KBM-7 (cell line): ENCODE measurements at regions of chr1 and their contacts with region 1.

Region 1: DNA sequence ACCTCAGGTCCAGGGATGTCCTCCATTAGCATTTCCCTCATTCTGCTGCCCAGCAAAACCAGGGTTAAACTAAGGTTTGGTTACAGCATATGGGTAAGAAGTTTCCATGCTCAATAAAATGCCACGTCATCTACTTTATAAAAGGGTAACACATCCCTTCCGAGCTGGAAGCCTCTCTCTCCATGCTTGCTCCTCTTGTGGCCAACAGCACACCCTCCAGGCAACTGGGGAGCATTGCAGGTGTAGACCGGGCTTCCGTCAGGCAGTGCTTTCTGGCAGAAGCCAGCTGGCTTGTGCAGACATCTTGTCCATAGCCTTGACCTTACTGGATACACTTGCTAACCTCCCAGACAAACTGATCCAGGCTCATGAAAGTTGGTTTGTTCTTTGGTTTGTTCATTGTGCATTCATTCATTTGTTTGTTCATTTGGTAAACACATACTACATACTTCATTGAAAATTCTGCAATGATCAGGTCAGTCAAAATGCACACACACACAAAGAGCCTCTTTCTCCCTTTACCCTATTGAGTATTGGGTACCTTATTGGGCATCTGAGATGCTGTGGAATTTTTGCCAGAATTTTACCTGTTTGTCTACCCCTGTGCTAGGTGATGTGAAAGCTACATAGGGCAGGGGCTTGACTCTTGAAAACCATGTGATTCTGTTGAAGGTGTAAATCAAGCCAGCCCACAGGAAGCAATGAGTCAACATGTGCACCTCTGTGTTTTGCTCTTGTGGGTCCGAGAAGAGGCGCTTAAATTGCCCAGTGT is 422.8 kb downstream of the CAMTA1 start:
- DNase-seq: peak; percentile 62

Region 2: GRCh38 chr1:6701437-6702153 is 506.5 kb before region 1 on chr1 and contains the start of gene DNAJC11:
- in situ Hi-C with region 1: loop called (anchors 25 kb)
- DNase-seq: peak; percentile 84

Region 3: DNA sequence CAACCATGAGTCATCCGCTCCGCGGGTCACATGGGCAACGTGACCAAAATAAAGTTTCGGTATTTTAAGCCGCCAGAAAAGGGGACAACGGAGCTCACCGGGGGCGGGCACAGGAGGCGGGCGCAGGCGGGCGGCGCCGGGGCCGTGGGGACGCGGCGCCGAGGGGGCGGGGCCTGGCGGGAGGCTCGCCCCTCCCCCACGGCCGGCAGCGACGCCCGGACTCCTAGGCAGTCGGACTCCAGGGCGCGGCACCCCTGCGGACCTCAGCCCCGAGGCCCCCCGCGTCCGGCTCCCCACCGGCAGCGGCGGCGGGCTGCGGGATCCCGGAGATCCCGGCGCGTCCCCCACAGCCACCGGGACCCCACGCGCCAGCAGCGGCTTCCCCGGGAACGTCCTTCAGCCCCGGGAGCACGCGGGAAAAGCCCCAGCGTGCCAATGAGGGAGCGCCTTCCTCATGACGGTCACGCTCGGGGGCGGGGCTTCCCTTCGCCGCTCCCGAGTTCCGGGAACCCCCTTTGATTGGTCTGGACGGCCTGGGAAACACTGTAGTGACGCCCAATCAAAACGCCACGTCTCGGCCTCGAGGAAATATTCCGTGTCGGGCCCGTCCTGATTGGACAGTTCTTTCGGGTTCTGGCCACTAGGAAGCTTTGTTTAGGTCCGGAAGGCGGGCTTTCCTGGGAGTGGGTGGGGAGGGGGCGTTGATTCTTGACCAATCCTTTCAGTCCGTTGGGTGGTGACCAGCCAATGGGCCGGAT is 423.3 kb before region 1 on chr1:
- in situ Hi-C with region 1: loop called (anchors 25 kb)
- DNase-seq: peak; percentile 100